IMR-90 (cell line): ENCODE measurements at regions of chr9 and their contacts with region 1.

Region 1: GRCh38 chr9:81394881-81395675 is 294.3 kb downstream of the TLE1 start:
- DNase-seq: no peak
- ATAC-seq: peak; percentile 54
- H3K4me3 ChIP-seq: no peak overlapping the region
- H3K27ac ChIP-seq: peak overlapping the region; percentile 5; the same call in 1 of the 2 replicates
- H3K4me1 ChIP-seq: peaks cover 10% of the 10 kb centered on the region
- H3K27me3 ChIP-seq: no peaks in the 10 kb centered on the region
- CTCF ChIP-seq: no peak
- POLR2A ChIP-seq: no peak
- RAD21 ChIP-seq: no peak

Region 2: GRCh38 chr9:79657891-79658290 is 1737.2 kb before region 1 on chr9:
- CTCF ChIA-PET with region 1: no interaction called
- POLR2A ChIA-PET with region 1: interaction called, 11 read pairs
- dilution Hi-C with region 1: no loop called
- in situ Hi-C with region 1: no loop called
- intact Hi-C with region 1: no loop called
- DNase-seq: no peak
- ATAC-seq: peak; percentile 25
- H3K4me3 ChIP-seq: no peak overlapping the region
- H3K27ac ChIP-seq: no peak overlapping the region
- H3K4me1 ChIP-seq: peaks cover 10% of the 10 kb centered on the region
- H3K27me3 ChIP-seq: no peaks in the 10 kb centered on the region
- CTCF ChIP-seq: no peak
- POLR2A ChIP-seq: no peak
- RAD21 ChIP-seq: no peak

Region 3: DNA sequence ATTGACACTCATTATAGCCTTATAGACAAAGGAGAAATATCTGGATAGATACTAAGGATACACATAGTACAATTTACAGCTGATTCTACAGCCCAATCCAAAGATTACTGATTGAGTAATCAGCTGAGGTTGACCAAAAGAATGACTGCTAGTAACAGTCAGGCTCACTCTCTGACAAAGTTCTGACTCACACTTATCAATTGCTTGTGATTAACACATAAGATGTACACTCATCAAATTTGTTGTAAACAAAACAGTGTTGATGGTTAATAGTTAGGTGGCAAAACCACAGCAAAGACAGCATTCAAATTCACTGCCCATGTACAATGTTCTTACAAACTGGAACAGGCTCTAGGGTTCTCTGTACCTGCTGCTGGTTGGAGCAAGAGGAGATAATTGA is 128.4 kb before region 1 on chr9:
- CTCF ChIA-PET with region 1: no interaction called
- POLR2A ChIA-PET with region 1: no interaction called
- dilution Hi-C with region 1: no loop called
- in situ Hi-C with region 1: no loop called
- intact Hi-C with region 1: loop called (anchors 5 kb)
- DNase-seq: peak; percentile 78
- ATAC-seq: peak; percentile 59
- H3K4me3 ChIP-seq: no peak overlapping the region
- H3K27ac ChIP-seq: no peak overlapping the region
- H3K4me1 ChIP-seq: peaks cover 3% of the 10 kb centered on the region
- H3K27me3 ChIP-seq: peaks cover 2% of the 10 kb centered on the region; the same call in 1 of the 2 replicates
- CTCF ChIP-seq: no peak
- POLR2A ChIP-seq: no peak
- RAD21 ChIP-seq: no peak

Region 4: DNA sequence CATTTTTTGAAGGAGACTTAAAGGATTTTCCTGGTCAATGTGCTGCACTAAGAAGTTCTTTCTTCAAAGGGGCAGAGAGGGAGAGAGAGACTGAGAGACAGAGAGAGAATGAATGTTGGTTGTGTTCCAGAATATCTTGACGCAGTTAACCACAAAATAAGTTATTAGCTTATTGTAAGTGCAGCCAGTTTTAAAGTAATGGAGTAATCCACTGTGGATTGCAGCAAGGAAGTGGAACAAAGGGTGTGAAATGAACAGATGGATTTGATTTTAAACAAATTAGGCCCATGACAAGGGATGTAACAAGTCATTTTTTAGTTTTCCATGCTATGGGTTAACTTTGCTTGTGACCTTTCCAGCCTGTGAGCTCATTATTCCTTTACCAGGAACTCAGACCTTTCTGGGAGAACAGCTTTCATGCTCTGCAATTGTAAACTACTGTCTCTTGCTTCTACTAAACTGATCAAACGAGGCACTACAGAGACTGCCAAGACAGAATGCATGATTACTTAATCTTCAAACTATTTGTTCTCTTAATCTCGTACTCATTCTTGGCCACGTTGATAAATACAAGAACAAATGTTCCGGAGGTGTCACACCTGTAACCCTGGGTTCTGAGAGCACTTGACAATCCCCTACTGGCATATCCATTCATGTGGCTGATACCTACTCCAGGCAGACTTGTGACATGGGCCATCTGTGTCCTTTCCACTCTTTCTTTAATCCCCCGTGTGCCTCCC is 163.2 kb after region 1 on chr9:
- CTCF ChIA-PET with region 1: no interaction called
- POLR2A ChIA-PET with region 1: no interaction called
- dilution Hi-C with region 1: no loop called
- in situ Hi-C with region 1: no loop called
- intact Hi-C with region 1: loop called (anchors 5 kb)
- DNase-seq: peak; percentile 88
- ATAC-seq: peak; percentile 64
- H3K4me3 ChIP-seq: no peak overlapping the region
- H3K27ac ChIP-seq: peak overlapping the region; percentile 69
- H3K4me1 ChIP-seq: peaks cover 25% of the 10 kb centered on the region
- H3K27me3 ChIP-seq: no peaks in the 10 kb centered on the region
- CTCF ChIP-seq: no peak
- POLR2A ChIP-seq: no peak
- RAD21 ChIP-seq: no peak; the same call in 1 of the 2 replicates